Activated CD4-positive, alpha-beta memory T cell treated with anti-CD3 and anti-CD28 coated beads, Interleukin-2, amount 10 ng/mL, durations not matched to agents 7 days and 5 days (primary cell): ENCODE measurements at regions of chr3 and their contacts with region 1.

Region 1: GRCh38 chr3:186849374-186849975 is 7.0 kb downstream of the ADIPOQ start:
- DNase-seq: no peak
- H3K4me3 Mint-ChIP-seq: no peak overlapping the region
- H3K27ac Mint-ChIP-seq: no peak overlapping the region
- H3K4me1 Mint-ChIP-seq: peaks cover 16% of the 10 kb centered on the region
- H3K27me3 Mint-ChIP-seq: peaks cover 6% of the 10 kb centered on the region

Region 2: DNA sequence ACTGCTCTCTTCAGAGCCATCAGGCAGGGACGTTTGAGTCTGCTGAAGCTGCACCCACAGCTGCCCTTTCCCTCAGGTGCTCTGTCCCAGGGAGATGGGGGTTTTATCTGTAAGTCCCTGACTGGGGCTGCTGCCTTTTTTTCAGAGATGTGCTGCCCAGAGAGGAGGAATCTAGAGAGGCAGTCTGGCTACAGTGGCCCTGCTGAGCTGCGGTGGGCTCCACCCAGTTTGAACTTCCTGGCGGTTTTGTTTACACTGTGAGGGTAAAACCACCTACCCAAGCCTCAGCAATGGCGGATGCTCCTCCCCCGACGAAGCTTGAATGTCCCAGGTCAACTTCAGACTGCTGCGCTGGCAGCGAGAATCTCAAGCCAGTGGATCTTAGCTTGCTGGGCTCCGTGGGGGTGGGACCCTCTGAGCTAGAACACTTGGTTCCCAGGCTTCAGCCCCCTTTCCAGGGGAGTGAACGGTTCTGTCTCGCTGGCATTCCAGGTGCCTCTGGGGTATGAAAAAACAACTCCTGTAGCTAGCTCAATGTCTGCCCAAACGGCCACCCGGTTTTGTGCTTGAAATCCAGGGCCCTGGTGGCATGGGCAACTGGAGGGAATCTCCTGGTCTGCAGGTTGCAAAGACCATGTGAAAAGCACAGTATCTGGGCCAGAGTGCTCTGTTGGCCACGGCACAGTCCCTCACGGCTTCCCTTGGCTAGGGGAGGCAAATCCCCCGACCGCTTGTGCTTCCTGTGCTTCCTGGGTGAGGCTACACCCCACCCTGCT is 59.8 kb after region 1 on chr3:
- CTCF ChIA-PET with region 1: interaction called, 15 read pairs
- POLR2A ChIA-PET with region 1: interaction called, 12 read pairs
- DNase-seq: peak; percentile 91
- H3K4me3 Mint-ChIP-seq: peak overlapping the region; percentile 42
- H3K27ac Mint-ChIP-seq: peak overlapping the region; percentile 94
- H3K4me1 Mint-ChIP-seq: peaks cover 44% of the 10 kb centered on the region
- H3K27me3 Mint-ChIP-seq: no peaks in the 10 kb centered on the region

Region 3: DNA sequence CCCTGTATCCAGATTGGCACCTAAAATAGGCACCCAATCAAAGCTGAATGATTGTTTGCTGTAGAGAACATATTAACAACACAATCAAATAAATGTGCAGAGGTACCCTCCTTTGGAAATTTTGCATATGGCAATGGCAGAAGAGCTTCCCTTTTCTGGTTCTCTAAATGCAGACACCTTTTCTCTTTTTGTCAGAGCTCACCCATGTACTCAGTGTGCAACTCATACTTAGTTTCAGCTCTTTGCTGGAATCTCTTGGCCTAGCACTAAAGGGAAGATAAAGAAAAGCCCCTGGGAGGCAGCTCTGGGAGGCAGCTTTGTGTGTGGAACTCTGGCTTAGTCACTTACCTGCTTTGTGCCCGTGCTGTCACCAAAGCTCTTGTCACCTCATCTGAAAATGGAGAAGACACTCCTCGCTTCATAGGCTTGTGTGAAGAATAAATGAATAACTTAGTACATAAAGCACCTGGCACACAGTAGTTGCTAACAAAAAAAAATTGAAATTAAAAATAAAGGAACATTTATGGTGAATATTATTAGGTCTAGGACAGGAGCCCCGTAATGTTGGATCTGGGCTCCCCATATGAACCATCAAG is 109.7 kb after region 1 on chr3:
- CTCF ChIA-PET with region 1: interaction called, 12 read pairs
- POLR2A ChIA-PET with region 1: no interaction called
- DNase-seq: no peak
- H3K4me3 Mint-ChIP-seq: no peak overlapping the region
- H3K27ac Mint-ChIP-seq: no peak overlapping the region
- H3K4me1 Mint-ChIP-seq: peaks cover 58% of the 10 kb centered on the region
- H3K27me3 Mint-ChIP-seq: no peaks in the 10 kb centered on the region

Region 4: GRCh38 chr3:187025656-187026316 is 176.3 kb after region 1 on chr3:
- CTCF ChIA-PET with region 1: interaction called, 22 read pairs
- POLR2A ChIA-PET with region 1: interaction called, 4 read pairs
- DNase-seq: peak; percentile 47
- H3K4me3 Mint-ChIP-seq: peak overlapping the region; percentile 73
- H3K27ac Mint-ChIP-seq: peak overlapping the region; percentile 88
- H3K4me1 Mint-ChIP-seq: peaks cover 72% of the 10 kb centered on the region
- H3K27me3 Mint-ChIP-seq: no peaks in the 10 kb centered on the region

Region 5: GRCh38 chr3:187112934-187113793 is 263.7 kb after region 1 on chr3:
- CTCF ChIA-PET with region 1: interaction called, 28 read pairs
- POLR2A ChIA-PET with region 1: no interaction called
- DNase-seq: no peak
- H3K4me3 Mint-ChIP-seq: no peak overlapping the region
- H3K27ac Mint-ChIP-seq: no peak overlapping the region
- H3K4me1 Mint-ChIP-seq: peaks cover 7% of the 10 kb centered on the region
- H3K27me3 Mint-ChIP-seq: no peaks in the 10 kb centered on the region

Region 6: GRCh38 chr3:187164885-187165543 is 315.5 kb after region 1 on chr3:
- CTCF ChIA-PET with region 1: interaction called, 45 read pairs
- POLR2A ChIA-PET with region 1: interaction called, 3 read pairs
- DNase-seq: peak; percentile 25
- H3K4me3 Mint-ChIP-seq: no peak overlapping the region
- H3K27ac Mint-ChIP-seq: no peak overlapping the region
- H3K4me1 Mint-ChIP-seq: peaks cover 4% of the 10 kb centered on the region
- H3K27me3 Mint-ChIP-seq: peaks cover 23% of the 10 kb centered on the region

Region 7: DNA sequence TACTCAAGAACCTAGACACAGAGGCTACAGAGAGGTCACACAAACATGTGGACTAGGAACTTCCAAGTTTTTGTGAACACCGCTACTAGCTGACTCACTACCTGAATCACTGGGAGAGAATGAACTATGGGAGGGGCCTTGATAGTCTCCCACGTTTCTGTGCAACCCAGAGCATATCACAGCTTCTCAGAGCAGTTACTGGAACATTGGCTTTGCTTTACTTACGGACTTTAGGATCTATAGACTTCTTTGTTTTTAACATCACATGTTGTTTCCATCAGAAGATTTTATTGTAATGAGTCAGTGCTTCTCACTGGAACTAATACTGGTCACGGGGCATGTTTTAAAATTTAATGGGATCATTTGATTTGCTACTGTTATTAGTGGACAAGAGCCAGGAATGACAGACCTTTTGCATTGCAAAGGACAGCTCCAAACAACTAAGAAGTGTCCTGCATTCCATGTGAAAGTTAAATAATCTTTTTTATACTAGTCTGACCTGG is 554.3 kb after region 1 on chr3:
- CTCF ChIA-PET with region 1: no interaction called
- POLR2A ChIA-PET with region 1: no interaction called
- DNase-seq: no peak
- H3K4me3 Mint-ChIP-seq: no peak overlapping the region
- H3K27ac Mint-ChIP-seq: no peak overlapping the region
- H3K4me1 Mint-ChIP-seq: no peaks in the 10 kb centered on the region
- H3K27me3 Mint-ChIP-seq: peaks cover 27% of the 10 kb centered on the region